ENCODE measurements at regions of chr12 and their contacts with region 1.

Region 1: DNA sequence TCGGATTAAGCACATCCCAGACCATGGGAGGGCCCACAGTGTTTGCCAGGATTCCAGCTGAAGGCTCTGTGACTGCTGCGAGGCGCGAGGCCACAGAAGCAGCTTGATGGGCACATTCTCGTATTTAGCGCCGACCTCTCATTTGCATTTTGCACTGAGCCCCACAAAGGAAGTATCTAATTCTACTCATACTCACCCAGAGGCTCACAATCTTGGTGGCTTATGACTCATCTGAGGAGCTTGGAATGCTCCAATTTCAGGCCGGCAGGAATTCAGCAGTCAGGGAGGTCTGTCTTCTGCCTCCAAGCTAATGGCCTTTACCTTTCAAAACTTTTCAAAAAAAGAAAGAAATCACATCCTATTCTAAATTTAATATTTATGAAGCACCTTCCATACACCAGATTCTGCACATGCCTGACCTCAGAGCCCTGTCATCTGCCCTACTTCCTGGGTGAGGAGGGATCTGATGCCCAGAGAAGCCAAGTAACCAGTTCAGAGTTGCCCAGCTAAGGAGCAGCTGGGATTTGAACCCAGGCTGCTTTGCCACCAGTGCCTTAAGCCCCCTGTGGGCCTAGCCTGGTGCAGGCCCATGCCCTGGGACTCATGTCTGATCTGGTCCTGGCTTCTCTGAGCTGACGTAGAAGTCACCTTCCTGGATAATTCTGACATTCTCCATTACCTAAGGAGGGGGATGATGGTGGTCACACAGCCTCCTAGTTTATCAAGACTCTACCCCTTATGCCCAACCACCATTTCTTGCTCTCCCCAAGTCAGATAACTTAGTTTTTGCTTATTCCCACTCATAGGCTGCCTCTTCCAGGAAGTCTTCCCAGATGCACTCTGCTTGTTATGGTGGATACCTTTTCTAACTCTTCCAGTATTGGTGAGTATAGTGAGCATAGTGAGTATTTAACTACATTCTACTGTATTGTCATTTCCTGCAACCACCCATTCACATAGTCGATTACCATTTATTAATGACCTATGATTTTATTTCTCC is 198.9 kb downstream of the RBM19 start:
- DNase-seq: no peak
- ATAC-seq: peak; percentile 77
- H3K4me3 ChIP-seq: no peak overlapping the region
- H3K27ac ChIP-seq: no peak overlapping the region
- H3K4me1 ChIP-seq: no peaks in the 10 kb centered on the region
- H3K27me3 ChIP-seq: no peaks in the 10 kb centered on the region
- CTCF ChIP-seq: no peak

Region 2: GRCh38 chr12:113548467-113548866 is 218.7 kb before region 1 on chr12:
- CTCF ChIA-PET with region 1: interaction called, 10 read pairs
- POLR2A ChIA-PET with region 1: no interaction called
- in situ Hi-C with region 1: no loop called
- intact Hi-C with region 1: no loop called
- DNase-seq: no peak
- ATAC-seq: no peak
- H3K4me3 ChIP-seq: no peak overlapping the region
- H3K27ac ChIP-seq: no peak overlapping the region
- H3K4me1 ChIP-seq: no peaks in the 10 kb centered on the region
- H3K27me3 ChIP-seq: no peaks in the 10 kb centered on the region; the same call in none of the 2 replicates
- CTCF ChIP-seq: no peak

Region 3: GRCh38 chr12:113747017-113747416 is 20.2 kb before region 1 on chr12:
- CTCF ChIA-PET with region 1: no interaction called
- POLR2A ChIA-PET with region 1: no interaction called
- in situ Hi-C with region 1: no loop called
- intact Hi-C with region 1: loop called (anchors 1 kb)
- DNase-seq: no peak
- ATAC-seq: no peak
- H3K4me3 ChIP-seq: no peak overlapping the region
- H3K27ac ChIP-seq: no peak overlapping the region
- H3K4me1 ChIP-seq: no peaks in the 10 kb centered on the region
- H3K27me3 ChIP-seq: peaks cover 22% of the 10 kb centered on the region
- CTCF ChIP-seq: no peak